Activated T-helper 2 cell treated with anti-CD3 and anti-CD28 coated beads, Interferon-gamma antibody, Interleukin-2, Interleukin-4, amounts not matched to agents 10 μg/mL and 5 μg/mL and 100 μg/mL, durations not matched to agents 14 hours and 24 hours and 36 hours (primary cell): ENCODE measurements at regions of chr14 and their contacts with region 1.

Region 1: GRCh38 chr14:39432179-39432618 is at the start of gene FBXO33:
- DNase-seq: peak; percentile 97
- H3K4me3 Mint-ChIP-seq: peak within 1 kb of the TSS; percentile 99
- H3K27ac Mint-ChIP-seq: peak within 1 kb of the TSS; percentile 100
- H3K4me1 Mint-ChIP-seq: peaks cover 35% of the 10 kb centered on the region
- H3K27me3 Mint-ChIP-seq: no peaks in the 10 kb centered on the region
- total RNA-seq, gene FBXO33: 15.7 and 16.2 TPM in 2 replicates

Region 2: GRCh38 chr14:39102969-39103957 is 328.9 kb before region 1 on chr14 and contains the start of gene SEC23A:
- intact Hi-C with region 1: loop called (anchors 1 kb)
- DNase-seq: peak; percentile 82
- H3K4me3 Mint-ChIP-seq: peak within 1 kb of the TSS; percentile 98
- H3K27ac Mint-ChIP-seq: peak within 1 kb of the TSS; percentile 98
- H3K4me1 Mint-ChIP-seq: peaks cover 29% of the 10 kb centered on the region
- H3K27me3 Mint-ChIP-seq: no peaks in the 10 kb centered on the region
- total RNA-seq, gene SEC23A: 76.4 and 86.7 TPM in 2 replicates

Region 3: GRCh38 chr14:39266871-39267591 is 165.2 kb before region 1 on chr14:
- intact Hi-C with region 1: loop called (anchors 1 kb)
- DNase-seq: peak; percentile 73
- H3K4me3 Mint-ChIP-seq: peak overlapping the region; percentile 75
- H3K27ac Mint-ChIP-seq: peak overlapping the region; percentile 93
- H3K4me1 Mint-ChIP-seq: peaks cover 43% of the 10 kb centered on the region
- H3K27me3 Mint-ChIP-seq: no peaks in the 10 kb centered on the region

Region 4: GRCh38 chr14:39302124-39302810 is 129.9 kb before region 1 on chr14:
- intact Hi-C with region 1: no loop called
- DNase-seq: no peak
- H3K4me3 Mint-ChIP-seq: no peak overlapping the region
- H3K27ac Mint-ChIP-seq: no peak overlapping the region
- H3K4me1 Mint-ChIP-seq: no peaks in the 10 kb centered on the region
- H3K27me3 Mint-ChIP-seq: no peaks in the 10 kb centered on the region

Region 5: DNA sequence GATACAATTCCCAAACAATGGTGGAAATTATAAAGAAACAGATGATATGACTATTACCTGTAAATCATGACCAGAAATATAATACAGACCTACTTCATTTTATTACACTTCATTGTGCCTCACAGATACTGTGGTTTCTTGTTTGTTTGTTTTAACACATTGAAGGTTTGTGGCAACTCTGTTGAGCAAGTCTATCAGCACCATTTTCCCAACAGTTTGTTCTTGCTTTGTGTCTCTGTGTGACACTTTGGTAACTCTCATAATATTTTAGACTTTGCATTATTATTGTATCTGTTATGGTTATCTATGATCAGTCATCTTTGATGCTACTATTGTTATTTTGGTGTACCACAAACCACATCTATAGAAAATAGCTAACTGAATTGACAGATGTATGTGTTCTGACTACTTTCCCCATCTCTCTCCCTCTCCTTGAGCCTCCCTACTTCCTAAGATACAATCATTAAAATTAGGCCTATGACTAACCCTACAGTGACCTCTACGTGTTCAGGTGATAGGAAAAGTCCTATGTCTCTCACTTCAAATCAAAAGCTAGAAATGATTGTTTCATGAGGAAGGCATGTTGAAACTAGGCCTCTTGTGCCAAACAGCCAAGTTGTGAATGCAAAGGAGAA is 49.1 kb before region 1 on chr14:
- intact Hi-C with region 1: loop called (anchors 5 kb)
- DNase-seq: no peak
- H3K4me3 Mint-ChIP-seq: no peak overlapping the region
- H3K27ac Mint-ChIP-seq: peak overlapping the region; percentile 36
- H3K4me1 Mint-ChIP-seq: peaks cover 37% of the 10 kb centered on the region
- H3K27me3 Mint-ChIP-seq: no peaks in the 10 kb centered on the region

Region 6: GRCh38 chr14:39446131-39446744 is 14.0 kb after region 1 on chr14:
- intact Hi-C with region 1: loop called (anchors 2 kb)
- DNase-seq: no peak
- H3K4me3 Mint-ChIP-seq: no peak overlapping the region
- H3K27ac Mint-ChIP-seq: no peak overlapping the region
- H3K4me1 Mint-ChIP-seq: peaks cover 34% of the 10 kb centered on the region
- H3K27me3 Mint-ChIP-seq: no peaks in the 10 kb centered on the region